Sigmoid colon (tissue), 7 donors: ENCODE measurements at regions of chr1 and their contacts with region 1.

Region 1: GRCh38 chr1:156920233-156921052 is at the start of gene LRRC71:
- DNase-seq: peak; percentile 85
- H3K4me3 ChIP-seq: peak within 1 kb of the TSS in 2 of 4 donors; percentile 7 to 29
- H3K27ac ChIP-seq: no peak within 1 kb of the TSS
- H3K4me1 ChIP-seq: peaks cover 0 to 25% (median 23%) of the 10 kb centered on the region in 4 donors
- H3K27me3 ChIP-seq: peaks cover 37 to 61% (median 60%) of the 10 kb centered on the region in 3 donors
- CTCF ChIP-seq: peak; percentile 29 to 63 (median 56)
- EP300 ChIP-seq: no peak
- POLR2A ChIP-seq: no peak
- total RNA-seq, gene LRRC71: not detected

Region 2: DNA sequence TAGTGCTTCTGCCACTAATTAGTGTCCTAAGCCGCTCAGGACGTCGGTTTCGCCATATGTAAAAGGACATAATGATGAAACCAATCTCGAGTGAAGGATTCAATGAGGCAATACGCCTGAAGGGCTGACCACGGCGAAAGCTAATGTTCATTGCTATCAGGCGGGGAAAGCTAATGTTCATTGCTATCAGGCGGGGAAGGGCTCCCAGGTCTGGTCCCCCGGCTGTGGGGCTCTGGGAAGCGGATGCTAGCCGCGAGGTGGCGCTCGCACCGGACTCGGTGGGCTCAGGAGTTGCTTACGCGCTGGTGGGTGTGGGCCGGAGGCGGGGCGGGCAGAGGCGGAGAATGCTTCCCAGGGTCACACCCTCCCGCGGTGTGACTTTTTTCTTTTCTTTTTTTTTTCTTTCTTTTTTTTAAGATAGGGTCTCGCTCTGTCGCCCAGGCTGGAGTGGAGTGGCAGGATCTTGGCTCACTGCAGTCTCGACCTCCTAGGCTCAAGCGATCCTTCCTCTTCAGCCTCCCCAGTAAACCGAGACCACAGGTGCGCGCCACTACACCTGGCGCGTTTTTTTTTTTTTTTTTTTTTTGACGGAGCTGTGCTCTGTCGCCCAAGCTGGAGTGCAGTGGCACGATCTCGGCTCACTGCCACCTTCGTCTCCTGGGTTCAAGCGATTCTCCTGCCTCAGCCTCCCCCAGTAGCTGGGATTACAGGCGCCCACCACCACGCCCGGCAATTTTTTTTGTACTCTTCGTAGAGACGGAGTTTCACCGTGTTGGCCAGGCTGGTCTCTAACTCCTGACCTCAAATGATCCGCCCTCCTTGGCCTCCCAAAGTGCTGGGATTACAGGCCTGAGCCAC is 28.0 kb before region 1 on chr1:
- intact Hi-C with region 1: loop called (anchors 1 kb)
- DNase-seq: peak; percentile 95
- H3K4me3 ChIP-seq: peak overlapping the region; percentile 7 to 45 (median 44)
- H3K27ac ChIP-seq: peak overlapping the region; percentile 72 to 83 (median 77)
- H3K4me1 ChIP-seq: peaks cover 0 to 25% (median 15%) of the 10 kb centered on the region in 4 donors
- H3K27me3 ChIP-seq: peaks cover 18 to 31% (median 22%) of the 10 kb centered on the region in 3 donors
- CTCF ChIP-seq: peak; percentile 14 to 77 (median 60)
- EP300 ChIP-seq: no peak
- POLR2A ChIP-seq: no peak

Region 3: GRCh38 chr1:157233131-157233530 is 312.7 kb after region 1 on chr1:
- intact Hi-C with region 1: no loop called
- DNase-seq: no peak
- H3K4me3 ChIP-seq: no peak overlapping the region
- H3K27ac ChIP-seq: no peak overlapping the region
- H3K4me1 ChIP-seq: peaks cover 0 to 6% (median 0%) of the 10 kb centered on the region in 4 donors
- H3K27me3 ChIP-seq: no peaks in the 10 kb centered on the region
- CTCF ChIP-seq: no peak
- EP300 ChIP-seq: no peak
- POLR2A ChIP-seq: no peak